RWPE1 (cell line): ENCODE measurements at regions of chr5 and their contacts with region 1.

Region 1: DNA sequence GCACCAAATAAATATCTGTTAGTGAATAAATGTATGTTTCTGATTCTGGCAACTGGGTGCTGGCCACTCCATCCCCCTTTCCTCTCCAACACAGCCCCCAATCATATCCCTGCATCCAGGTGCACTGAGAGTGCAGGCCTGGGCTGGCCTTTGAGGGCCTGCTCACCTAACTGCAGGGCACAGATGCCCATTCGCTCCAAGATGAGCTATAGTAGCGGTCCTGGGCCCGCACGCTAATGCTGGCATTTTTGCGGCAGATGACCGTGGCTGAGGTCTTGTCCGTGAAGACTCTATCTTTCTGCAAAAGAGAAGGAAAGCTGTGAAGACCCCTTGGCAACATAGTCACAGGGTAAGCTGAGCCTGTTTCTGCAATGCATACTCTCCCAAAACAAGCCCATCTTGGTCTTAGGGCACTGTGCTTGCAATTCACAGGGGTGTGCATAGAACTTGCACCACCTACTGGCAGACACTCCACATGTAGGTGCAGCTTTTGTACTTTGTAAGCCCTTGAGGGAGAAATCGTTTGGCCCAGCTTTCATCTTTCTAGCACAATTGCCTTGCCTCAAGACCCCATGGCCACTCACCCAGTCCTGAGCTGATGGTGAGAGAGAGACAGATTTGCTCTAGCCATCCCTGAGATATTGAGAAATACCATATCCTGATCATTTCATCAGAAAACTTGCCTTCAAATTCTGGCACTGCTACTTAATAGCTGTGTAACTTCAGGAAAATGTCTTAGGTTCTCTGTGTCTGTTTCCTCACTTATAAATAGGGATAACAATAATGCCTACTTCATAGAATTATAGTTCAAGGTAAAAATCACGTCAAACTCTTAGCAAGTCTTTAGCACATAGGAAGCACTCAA is 13.5 kb downstream of the IL12B start:
- DNase-seq: peak; percentile 64
- H3K27ac ChIP-seq: no peak overlapping the region
- CTCF ChIP-seq: peak; percentile 69

Region 2: GRCh38 chr5:159156426-159157238 is 160.1 kb before region 1 on chr5:
- CTCF ChIA-PET with region 1: interaction called, 19 read pairs
- POLR2A ChIA-PET with region 1: no interaction called
- DNase-seq: peak; percentile 82
- H3K27ac ChIP-seq: no peak overlapping the region
- CTCF ChIP-seq: peak; percentile 95

Region 3: DNA sequence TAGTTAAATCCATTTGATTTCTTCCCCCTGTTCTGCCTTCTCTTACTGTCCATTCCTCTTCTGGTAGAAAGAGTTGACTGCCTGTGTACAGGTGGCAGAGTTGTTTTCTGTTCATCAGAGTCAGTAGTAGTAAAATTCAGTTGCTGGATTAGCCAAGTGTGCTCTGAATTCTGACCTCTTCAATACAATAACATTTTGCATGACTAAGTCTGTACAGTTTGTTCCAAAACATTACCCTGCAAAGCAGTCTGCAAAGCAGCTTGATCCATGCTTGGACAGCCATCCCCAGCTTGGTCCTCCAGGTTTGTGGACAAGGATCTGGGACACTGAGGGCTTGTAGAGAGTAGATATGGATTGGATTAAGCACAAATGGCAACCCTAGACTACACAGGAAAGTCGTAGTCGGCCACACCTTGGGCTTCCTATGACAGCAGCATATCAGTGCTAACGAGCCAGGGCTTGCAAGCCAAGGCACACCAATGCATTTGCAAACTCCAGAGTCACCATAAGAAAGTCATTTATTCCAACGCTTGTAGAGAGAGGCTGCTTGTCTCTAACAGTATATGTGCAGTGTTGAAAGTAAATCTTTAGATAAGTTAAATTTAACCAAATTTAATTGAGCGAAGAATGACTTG is 11.7 kb before region 1 on chr5:
- CTCF ChIA-PET with region 1: interaction called, 11 read pairs
- POLR2A ChIA-PET with region 1: no interaction called
- DNase-seq: peak; percentile 18
- H3K27ac ChIP-seq: no peak overlapping the region
- CTCF ChIP-seq: no peak

Region 4: GRCh38 chr5:159786901-159787691 is 470.3 kb after region 1 on chr5:
- CTCF ChIA-PET with region 1: no interaction called
- POLR2A ChIA-PET with region 1: no interaction called
- DNase-seq: no peak
- H3K27ac ChIP-seq: no peak overlapping the region
- CTCF ChIP-seq: no peak